Mammary epithelial cell (primary cell): ENCODE measurements at regions of chrX and their contacts with region 1.

Region 1: GRCh38 chrX:136880452-136881013 is at the start of gene RBMX:
- DNase-seq: peak; percentile 81
- H3K4me3 ChIP-seq: peak within 1 kb of the TSS; percentile 44 to 76 (median 68)
- H3K27ac ChIP-seq: peak within 1 kb of the TSS; percentile 73
- H3K4me1 ChIP-seq: no peaks in the 10 kb centered on the region
- H3K27me3 ChIP-seq: no peaks in the 10 kb centered on the region
- CTCF ChIP-seq: no peak
- total RNA-seq, gene RBMX: 123 to 170 TPM

Region 2: GRCh38 chrX:136909706-136910564 is 29.4 kb after region 1 on chrX:
- CTCF ChIA-PET with region 1: no interaction called
- dilution Hi-C with region 1: no loop called
- in situ Hi-C with region 1: no loop called
- intact Hi-C with region 1: loop called (anchors 1 kb)
- DNase-seq: peak; percentile 88
- H3K4me3 ChIP-seq: peak overlapping the region; percentile 48 to 79 (median 65)
- H3K27ac ChIP-seq: peak overlapping the region; percentile 85
- H3K4me1 ChIP-seq: no peaks in the 10 kb centered on the region
- H3K27me3 ChIP-seq: no peaks in the 10 kb centered on the region
- CTCF ChIP-seq: no peak

Region 3: GRCh38 chrX:136920001-136920400 is 39.5 kb after region 1 on chrX:
- CTCF ChIA-PET with region 1: no interaction called
- dilution Hi-C with region 1: no loop called
- in situ Hi-C with region 1: no loop called
- intact Hi-C with region 1: loop called (anchors 5 kb)
- DNase-seq: no peak
- H3K4me3 ChIP-seq: no peak overlapping the region
- H3K27ac ChIP-seq: no peak overlapping the region
- H3K4me1 ChIP-seq: no peaks in the 10 kb centered on the region
- H3K27me3 ChIP-seq: no peaks in the 10 kb centered on the region
- CTCF ChIP-seq: no peak